ENCODE measurements at regions of chr6 and their contacts with region 1.

Region 1: GRCh38 chr6:135030056-135030473 is 24.6 kb downstream of the HBS1L start:
- DNase-seq: no peak
- H3K4me3 Mint-ChIP-seq: peak overlapping the region; percentile 45
- H3K27ac Mint-ChIP-seq: peak overlapping the region; percentile 78
- H3K4me1 Mint-ChIP-seq: peaks cover 51% of the 10 kb centered on the region
- H3K27me3 Mint-ChIP-seq: no peaks in the 10 kb centered on the region

Region 2: GRCh38 chr6:134979142-134979541 is 50.9 kb before region 1 on chr6:
- intact Hi-C with region 1: loop called (anchors 2 kb)
- DNase-seq: peak; percentile 55
- H3K4me3 Mint-ChIP-seq: peak overlapping the region; percentile 57
- H3K27ac Mint-ChIP-seq: peak overlapping the region; percentile 78
- H3K4me1 Mint-ChIP-seq: peaks cover 52% of the 10 kb centered on the region
- H3K27me3 Mint-ChIP-seq: no peaks in the 10 kb centered on the region

Region 3: DNA sequence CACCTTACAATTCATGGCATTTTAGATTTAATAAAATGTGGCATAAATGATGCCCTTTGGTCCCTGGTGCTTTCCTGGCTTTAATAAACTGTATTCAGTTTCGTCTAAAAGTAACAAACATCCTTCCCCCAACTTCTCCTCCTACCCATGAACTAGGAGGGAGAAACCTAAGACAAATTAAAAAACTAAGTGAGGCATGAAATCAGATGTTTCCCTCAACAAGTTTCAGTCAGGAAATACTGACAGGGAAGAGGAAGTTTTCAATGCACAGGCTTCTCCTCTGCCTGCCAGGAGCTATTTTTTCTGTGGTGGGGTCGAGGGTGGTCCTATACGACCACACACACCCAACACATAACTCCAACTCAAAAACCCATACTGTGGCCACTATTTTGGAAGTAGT is 14.6 kb after region 1 on chr6:
- intact Hi-C with region 1: no loop called
- DNase-seq: no peak
- H3K4me3 Mint-ChIP-seq: no peak overlapping the region
- H3K27ac Mint-ChIP-seq: no peak overlapping the region
- H3K4me1 Mint-ChIP-seq: peaks cover 46% of the 10 kb centered on the region
- H3K27me3 Mint-ChIP-seq: no peaks in the 10 kb centered on the region

Region 4: DNA sequence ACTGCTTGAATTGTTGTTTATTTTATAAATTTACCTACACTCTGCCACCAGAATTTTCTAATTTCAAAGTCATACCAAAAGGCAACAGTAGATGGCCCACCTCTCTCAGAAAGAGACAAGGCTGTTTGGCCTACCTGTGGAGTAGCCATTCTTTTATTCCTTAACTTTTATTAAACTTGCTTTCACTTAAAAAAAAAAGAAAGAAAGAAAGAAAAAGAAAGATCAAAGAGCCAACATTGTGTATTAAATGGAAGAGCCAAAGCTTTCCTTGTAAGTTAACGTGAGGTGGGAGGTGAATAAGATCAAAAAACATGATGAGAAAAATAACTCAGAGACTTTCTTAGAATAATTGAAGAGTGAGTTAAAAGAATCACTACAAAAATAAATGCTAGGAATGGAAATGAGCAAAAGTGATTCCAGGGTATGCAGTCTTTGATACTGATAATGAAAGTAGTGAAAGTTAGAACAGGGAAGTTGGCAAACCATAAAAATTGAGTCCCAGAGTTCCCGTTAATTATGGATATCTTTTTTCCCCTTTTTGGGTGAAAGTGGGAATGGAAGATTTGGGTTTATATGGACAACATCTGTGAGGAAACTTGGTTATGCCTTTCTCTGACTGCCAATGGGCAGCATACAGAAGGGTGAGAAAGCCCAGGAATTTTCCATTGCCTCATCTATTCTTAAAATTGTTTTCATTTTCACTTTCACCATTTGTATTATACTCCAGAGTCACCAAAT is 115.2 kb after region 1 on chr6:
- intact Hi-C with region 1: no loop called
- DNase-seq: no peak
- H3K4me3 Mint-ChIP-seq: peak overlapping the region; percentile 55
- H3K27ac Mint-ChIP-seq: peak overlapping the region; percentile 89
- H3K4me1 Mint-ChIP-seq: peaks cover 64% of the 10 kb centered on the region
- H3K27me3 Mint-ChIP-seq: no peaks in the 10 kb centered on the region